Posterior cingulate gyrus (tissue), 11 donors: ENCODE measurements at regions of chr19 and their contacts with region 1.

Region 1: GRCh38 chr19:11558881-11559828 is at the start of gene ELOF1:
- DNase-seq: peak; percentile 95 to 100 (median 98)

Region 2: GRCh38 chr19:11505032-11505503 is 54.1 kb before region 1 on chr19:
- intact Hi-C with region 1: loop called (anchors 5 kb)
- DNase-seq: peak; percentile 92 to 100 (median 97)

Region 3: DNA sequence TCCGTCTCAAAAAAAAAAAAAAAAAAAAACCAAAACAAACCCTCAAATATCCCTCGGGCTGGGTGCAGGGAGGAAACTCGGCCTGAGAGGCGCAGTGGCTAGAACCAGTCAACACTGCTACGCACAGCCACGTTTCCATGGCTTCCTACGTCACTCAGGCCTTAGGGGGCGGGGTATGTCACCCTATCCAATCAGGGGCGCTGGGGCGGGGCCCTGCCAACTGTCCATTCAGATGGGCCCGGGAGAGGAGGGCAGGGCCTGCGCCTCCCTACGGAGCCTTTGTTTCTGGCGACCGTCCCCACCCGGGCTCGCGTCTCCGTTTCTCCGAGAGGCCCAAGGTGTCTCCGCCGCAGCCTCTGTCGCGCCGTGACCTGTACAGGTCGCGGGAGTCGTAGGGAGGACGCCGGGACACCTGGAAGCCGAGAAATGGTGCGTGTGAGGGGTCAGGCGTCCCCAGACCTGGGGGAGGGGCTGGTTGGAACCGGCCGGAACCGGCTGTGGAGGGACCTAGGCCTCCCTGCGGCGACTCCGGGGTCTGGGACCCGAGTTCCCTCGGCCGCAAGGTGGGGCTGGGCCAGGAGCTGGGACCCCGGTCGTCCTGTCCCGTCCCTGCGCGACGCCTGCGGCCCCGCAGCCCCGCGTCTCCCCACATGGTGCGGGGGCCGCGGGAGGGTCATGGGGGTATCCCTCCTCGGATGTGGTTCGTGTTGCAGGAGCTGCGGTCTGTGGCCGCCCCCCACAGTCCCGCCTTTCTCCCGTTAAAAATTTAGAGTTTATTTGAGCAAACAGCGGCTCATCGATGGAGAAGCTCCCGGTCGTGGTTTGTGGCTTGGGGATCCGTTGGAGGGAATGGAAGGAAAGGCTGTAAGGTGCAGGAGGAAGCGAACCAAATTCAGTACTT is 38.3 kb after region 1 on chr19 and contains the start of gene ZNF627:
- intact Hi-C with region 1: loop called (anchors 5 kb)
- DNase-seq: peak; percentile 95 to 100 (median 99)